B cell (primary cell): ENCODE measurements at regions of chr6 and their contacts with region 1.

Region 1: DNA sequence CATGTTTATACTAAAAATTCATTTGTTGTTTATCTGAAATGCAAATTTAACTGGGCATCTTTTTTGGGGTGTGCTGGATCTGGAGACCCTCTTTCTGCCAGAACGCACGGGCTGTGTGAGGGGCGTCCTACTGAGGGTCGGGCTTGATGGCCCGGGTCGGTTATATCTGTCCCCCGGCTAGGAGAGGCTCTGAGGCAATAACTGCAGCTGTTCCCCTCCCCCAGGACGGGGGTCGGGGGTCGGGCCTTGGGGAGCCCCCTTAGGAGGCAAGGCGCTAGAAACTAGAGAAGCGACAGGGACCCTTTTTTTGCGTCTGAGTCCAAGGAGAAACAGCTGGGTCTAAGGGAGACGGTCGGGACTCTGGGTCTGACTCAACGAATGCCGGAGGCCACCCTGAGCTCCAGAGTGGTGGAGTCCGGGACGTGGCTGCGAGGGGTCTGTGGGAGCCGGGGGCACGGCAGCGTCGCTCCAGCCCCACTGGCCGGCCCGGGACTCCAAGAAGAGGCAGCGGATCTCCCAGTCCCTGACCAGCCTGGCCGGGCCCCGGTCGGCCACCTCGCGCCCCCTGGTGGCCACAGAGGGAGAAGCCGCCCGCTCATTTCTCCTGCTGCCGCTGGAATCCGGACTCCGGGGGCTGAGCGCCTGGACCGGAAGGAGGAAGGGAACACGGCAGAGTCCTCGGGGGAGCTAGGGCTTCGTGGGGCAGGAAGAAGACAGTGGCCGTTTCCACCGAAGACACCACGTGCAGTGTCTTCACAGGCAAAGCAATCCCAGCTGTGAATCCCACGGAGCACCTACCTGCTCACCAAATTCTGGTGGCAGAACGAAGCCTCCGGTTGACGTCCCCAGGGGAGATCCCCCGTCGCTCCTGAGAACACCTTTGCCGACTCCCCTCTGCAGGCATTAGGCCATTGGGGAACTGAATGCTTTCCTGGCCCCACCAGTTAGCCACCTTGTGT is 24.0 kb upstream of the SCML4 start:
- DNase-seq: peak; percentile 85
- ATAC-seq: peak; percentile 90
- H3K4me3 ChIP-seq: peak overlapping the region; percentile 3 to 65 (median 56)
- H3K4me3 Mint-ChIP-seq: peak overlapping the region; percentile 85
- H3K27ac ChIP-seq: peak overlapping the region in 1 of 2 donors; percentile 34
- H3K27ac Mint-ChIP-seq: no peak overlapping the region
- H3K4me1 ChIP-seq: peaks cover 9 to 13% of the 10 kb centered on the region in 2 donors
- H3K4me1 Mint-ChIP-seq: peaks cover 15% of the 10 kb centered on the region
- H3K27me3 ChIP-seq: peaks cover 0 to 9% (median 2%) of the 10 kb centered on the region in 4 experiments
- H3K27me3 Mint-ChIP-seq: peaks cover 7% of the 10 kb centered on the region
- CTCF ChIP-seq: peak; percentile 96

Region 2: GRCh38 chr6:107132330-107132954 is 715.7 kb before region 1 on chr6:
- CTCF ChIA-PET with region 1: interaction called, 5 read pairs
- POLR2A ChIA-PET with region 1: no interaction called
- intact Hi-C with region 1: loop called (anchors 5 kb)
- DNase-seq: peak; percentile 47
- ATAC-seq: no peak
- H3K4me3 ChIP-seq: no peak overlapping the region
- H3K4me3 Mint-ChIP-seq: no peak overlapping the region
- H3K27ac ChIP-seq: no peak overlapping the region
- H3K27ac Mint-ChIP-seq: no peak overlapping the region
- H3K4me1 ChIP-seq: no peaks in the 10 kb centered on the region
- H3K4me1 Mint-ChIP-seq: no peaks in the 10 kb centered on the region
- H3K27me3 ChIP-seq: no peaks in the 10 kb centered on the region
- H3K27me3 Mint-ChIP-seq: peaks cover 3% of the 10 kb centered on the region
- CTCF ChIP-seq: peak; percentile 59

Region 3: DNA sequence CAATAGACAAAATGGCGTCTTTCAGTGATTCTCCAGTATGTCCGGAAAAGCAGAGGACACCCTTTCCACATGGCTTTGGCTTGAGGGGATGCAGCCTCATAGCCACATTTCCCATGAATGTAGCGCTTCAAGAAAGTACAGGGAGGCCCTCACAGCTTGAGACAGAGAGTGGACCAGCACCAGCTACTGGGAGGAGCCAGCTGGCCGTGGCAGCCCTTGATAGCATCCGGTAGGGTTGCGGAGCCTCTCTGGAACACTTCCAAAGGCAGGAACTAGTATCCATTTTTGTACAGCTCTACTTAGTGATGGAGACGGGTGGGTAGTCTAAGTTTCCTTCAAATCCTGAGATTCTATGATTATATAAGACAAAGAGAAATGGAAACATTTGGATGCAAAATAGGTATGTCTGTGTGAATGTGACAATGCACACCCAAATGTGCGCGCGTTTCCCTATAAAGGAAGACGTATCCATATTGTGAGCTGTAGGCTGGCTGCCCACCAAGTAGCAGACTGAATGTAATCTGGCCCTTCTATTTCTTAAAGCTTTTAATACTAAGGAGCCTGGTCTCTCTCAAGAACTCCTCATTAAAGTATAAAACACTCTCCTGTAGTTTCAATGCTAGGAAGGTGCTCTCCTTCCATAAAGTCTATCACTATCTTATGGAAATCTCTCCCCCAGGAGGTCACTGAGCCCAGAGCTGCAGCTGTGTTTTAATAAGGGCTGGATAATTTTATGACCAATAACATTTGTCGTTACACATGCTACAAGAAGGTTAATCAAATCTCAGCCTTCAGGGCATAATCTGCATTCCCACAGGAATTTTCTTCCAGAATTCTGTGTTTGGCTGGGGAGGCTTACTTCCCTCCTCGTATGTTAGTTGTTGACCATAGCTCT is 284.2 kb before region 1 on chr6:
- CTCF ChIA-PET with region 1: no interaction called
- POLR2A ChIA-PET with region 1: no interaction called
- intact Hi-C with region 1: no loop called
- DNase-seq: no peak
- ATAC-seq: no peak
- H3K4me3 ChIP-seq: no peak overlapping the region
- H3K4me3 Mint-ChIP-seq: no peak overlapping the region
- H3K27ac ChIP-seq: no peak overlapping the region
- H3K27ac Mint-ChIP-seq: no peak overlapping the region
- H3K4me1 ChIP-seq: no peaks in the 10 kb centered on the region
- H3K4me1 Mint-ChIP-seq: no peaks in the 10 kb centered on the region
- H3K27me3 ChIP-seq: peaks cover 0 to 3% (median 0%) of the 10 kb centered on the region in 4 experiments
- H3K27me3 Mint-ChIP-seq: peaks cover 17% of the 10 kb centered on the region
- CTCF ChIP-seq: no peak

Region 4: GRCh38 chr6:107674995-107675738 is 173.0 kb before region 1 on chr6:
- CTCF ChIA-PET with region 1: interaction called, 55 read pairs
- POLR2A ChIA-PET with region 1: interaction called, 4 read pairs
- intact Hi-C with region 1: loop called (anchors 1 kb)
- DNase-seq: peak; percentile 93
- ATAC-seq: peak; percentile 91
- H3K4me3 ChIP-seq: peak overlapping the region in 4 of 5 experiments; percentile 29 to 58 (median 48)
- H3K4me3 Mint-ChIP-seq: peak overlapping the region; percentile 89
- H3K27ac ChIP-seq: peak overlapping the region; percentile 75 to 89
- H3K27ac Mint-ChIP-seq: peak overlapping the region; percentile 92
- H3K4me1 ChIP-seq: peaks cover 29% of the 10 kb centered on the region in 2 donors
- H3K4me1 Mint-ChIP-seq: peaks cover 28% of the 10 kb centered on the region
- H3K27me3 ChIP-seq: no peaks in the 10 kb centered on the region
- H3K27me3 Mint-ChIP-seq: no peaks in the 10 kb centered on the region
- CTCF ChIP-seq: peak; percentile 94

Region 5: DNA sequence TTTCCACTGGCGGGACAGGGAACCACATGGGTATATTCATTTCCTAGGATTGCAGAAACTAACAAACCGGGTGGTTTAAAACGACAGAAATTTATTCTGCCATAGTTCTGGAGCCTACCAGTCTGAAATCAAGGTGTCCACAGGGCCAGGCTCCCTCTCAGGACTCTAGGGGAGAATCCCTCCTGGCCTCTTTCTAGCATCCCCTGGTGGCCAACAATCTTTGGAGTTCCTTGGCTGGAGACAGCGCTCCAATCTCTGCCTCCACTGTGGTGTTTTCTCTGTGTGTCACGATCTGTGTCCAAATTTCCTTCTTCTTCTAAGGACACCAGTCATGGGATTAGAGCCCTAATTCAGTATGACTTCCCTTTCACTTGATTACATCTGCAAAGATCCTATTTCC is 119.0 kb before region 1 on chr6:
- CTCF ChIA-PET with region 1: interaction called, 11 read pairs
- POLR2A ChIA-PET with region 1: no interaction called
- intact Hi-C with region 1: no loop called
- DNase-seq: no peak
- ATAC-seq: no peak
- H3K4me3 ChIP-seq: no peak overlapping the region
- H3K4me3 Mint-ChIP-seq: no peak overlapping the region
- H3K27ac ChIP-seq: no peak overlapping the region
- H3K27ac Mint-ChIP-seq: no peak overlapping the region
- H3K4me1 ChIP-seq: peaks cover 26 to 31% of the 10 kb centered on the region in 2 donors
- H3K4me1 Mint-ChIP-seq: peaks cover 39% of the 10 kb centered on the region
- H3K27me3 ChIP-seq: no peaks in the 10 kb centered on the region
- H3K27me3 Mint-ChIP-seq: no peaks in the 10 kb centered on the region
- CTCF ChIP-seq: no peak

Region 6: DNA sequence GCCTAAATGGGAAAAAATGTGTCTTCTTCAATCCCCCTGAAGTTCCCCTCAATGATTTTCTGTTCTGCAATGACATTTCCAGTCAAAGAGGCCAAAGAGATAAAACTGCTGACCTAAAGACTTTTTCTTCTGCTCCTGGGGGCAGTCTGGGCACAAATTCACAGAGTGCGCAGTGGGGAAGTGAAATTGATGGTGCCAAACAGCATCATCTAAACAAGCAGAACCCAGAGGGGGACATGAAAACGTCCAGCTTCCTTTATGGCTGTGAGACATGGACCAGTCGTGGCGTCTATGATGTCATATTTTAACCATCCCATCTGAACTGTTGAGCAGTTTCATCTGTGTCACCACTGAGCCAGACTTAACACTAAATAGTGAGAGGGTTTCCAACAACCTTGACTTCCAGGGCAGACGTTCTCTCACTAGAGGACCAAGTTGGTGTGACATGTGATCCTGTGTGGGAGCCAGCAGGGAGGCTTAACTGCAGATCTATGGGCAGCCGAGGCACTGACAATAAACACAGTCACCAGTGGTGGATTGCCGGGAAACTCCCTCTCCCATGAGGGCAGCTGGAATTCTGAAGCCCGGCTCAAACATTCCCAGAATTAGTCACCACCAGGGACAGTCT is 36.4 kb before region 1 on chr6:
- CTCF ChIA-PET with region 1: interaction called, 7 read pairs
- POLR2A ChIA-PET with region 1: no interaction called
- intact Hi-C with region 1: loop called (anchors 5 kb)
- DNase-seq: peak; percentile 47
- ATAC-seq: peak; percentile 57
- H3K4me3 ChIP-seq: no peak overlapping the region
- H3K4me3 Mint-ChIP-seq: peak overlapping the region; percentile 12
- H3K27ac ChIP-seq: peak overlapping the region; percentile 17 to 30
- H3K27ac Mint-ChIP-seq: peak overlapping the region; percentile 54
- H3K4me1 ChIP-seq: peaks cover 6 to 9% of the 10 kb centered on the region in 2 donors
- H3K4me1 Mint-ChIP-seq: peaks cover 14% of the 10 kb centered on the region
- H3K27me3 ChIP-seq: no peaks in the 10 kb centered on the region
- H3K27me3 Mint-ChIP-seq: no peaks in the 10 kb centered on the region
- CTCF ChIP-seq: no peak

Region 7: GRCh38 chr6:107866606-107867301 is 18.6 kb after region 1 on chr6:
- CTCF ChIA-PET with region 1: interaction called, 28 read pairs
- POLR2A ChIA-PET with region 1: no interaction called
- intact Hi-C with region 1: no loop called
- DNase-seq: peak; percentile 62
- ATAC-seq: peak; percentile 24
- H3K4me3 ChIP-seq: peak overlapping the region in 3 of 5 experiments; percentile 22 to 37 (median 30)
- H3K4me3 Mint-ChIP-seq: peak overlapping the region; percentile 39
- H3K27ac ChIP-seq: no peak overlapping the region
- H3K27ac Mint-ChIP-seq: no peak overlapping the region
- H3K4me1 ChIP-seq: peaks cover 28 to 30% of the 10 kb centered on the region in 2 donors
- H3K4me1 Mint-ChIP-seq: peaks cover 43% of the 10 kb centered on the region
- H3K27me3 ChIP-seq: no peaks in the 10 kb centered on the region
- H3K27me3 Mint-ChIP-seq: peaks cover 3% of the 10 kb centered on the region
- CTCF ChIP-seq: peak; percentile 80

Region 8: DNA sequence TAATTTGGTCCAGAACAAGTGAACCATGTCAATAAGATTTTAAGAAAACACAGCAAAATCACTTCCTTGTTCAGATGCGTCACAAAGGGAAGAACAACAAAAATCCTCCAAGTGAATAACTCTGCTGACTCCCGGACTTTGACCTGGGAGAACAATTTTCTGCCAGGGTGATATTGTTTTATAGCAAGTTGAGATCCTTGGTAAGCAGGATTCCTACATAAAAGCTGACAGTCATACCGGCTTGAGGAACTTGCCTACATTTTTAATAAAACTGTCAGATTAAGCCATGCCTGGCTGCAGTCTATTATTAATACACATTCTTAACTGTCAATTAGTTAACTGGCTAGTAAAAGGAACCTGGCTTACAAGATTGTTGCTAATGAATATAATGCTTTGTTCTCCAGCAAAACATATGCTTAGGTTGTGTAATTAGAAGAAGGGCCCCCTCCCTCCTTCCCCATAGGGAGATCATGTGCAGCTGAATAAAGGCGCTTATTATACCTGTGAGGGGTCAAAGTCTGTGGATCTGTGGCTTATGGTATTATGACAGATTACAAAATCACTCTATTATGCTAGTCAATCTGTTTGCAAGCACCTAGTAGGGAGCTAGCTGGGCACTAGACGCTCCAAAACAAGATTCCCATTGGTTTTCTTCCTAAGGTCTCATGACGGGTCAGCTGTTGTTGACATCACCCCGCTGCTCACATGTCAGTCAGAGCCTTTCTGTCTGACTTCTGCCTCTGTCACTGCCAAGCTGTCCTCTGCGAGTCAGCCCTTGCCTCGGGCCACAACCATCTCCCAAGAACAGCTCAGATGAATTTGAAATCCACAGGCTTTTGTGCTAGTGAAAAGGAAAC is 154.5 kb after region 1 on chr6:
- CTCF ChIA-PET with region 1: no interaction called
- POLR2A ChIA-PET with region 1: no interaction called
- intact Hi-C with region 1: no loop called
- DNase-seq: no peak
- ATAC-seq: no peak
- H3K4me3 ChIP-seq: no peak overlapping the region
- H3K4me3 Mint-ChIP-seq: no peak overlapping the region
- H3K27ac ChIP-seq: no peak overlapping the region
- H3K27ac Mint-ChIP-seq: no peak overlapping the region
- H3K4me1 ChIP-seq: no peaks in the 10 kb centered on the region
- H3K4me1 Mint-ChIP-seq: peaks cover 3% of the 10 kb centered on the region
- H3K27me3 ChIP-seq: peaks cover 0 to 3% (median 0%) of the 10 kb centered on the region in 4 experiments
- H3K27me3 Mint-ChIP-seq: peaks cover 3% of the 10 kb centered on the region
- CTCF ChIP-seq: no peak